WTC11 (cell line): ENCODE measurements at regions of chr5 and their contacts with region 1.

Region 1: GRCh38 chr5:172984243-172984953 is 827 bp downstream of the ATP6V0E1 start:
- DNase-seq: peak; percentile 68
- ATAC-seq: peak; percentile 73
- H3K4me3 Mint-ChIP-seq: peak overlapping the region; percentile 98
- H3K27ac Mint-ChIP-seq: peak overlapping the region; percentile 97
- H3K4me1 Mint-ChIP-seq: peaks cover 9% of the 10 kb centered on the region
- H3K27me3 Mint-ChIP-seq: peaks cover 3% of the 10 kb centered on the region; the same call in 1 of the 2 replicates
- CTCF ChIP-seq: no peak

Region 2: GRCh38 chr5:172707285-172708182 is 276.9 kb before region 1 on chr5:
- CTCF ChIA-PET with region 1: interaction called, 17 read pairs
- POLR2A ChIA-PET with region 1: no interaction called
- DNase-seq: peak; percentile 61
- ATAC-seq: peak; percentile 88
- H3K4me3 Mint-ChIP-seq: peak overlapping the region; percentile 18; the same call in 1 of the 2 replicates
- H3K27ac Mint-ChIP-seq: no peak overlapping the region
- H3K4me1 Mint-ChIP-seq: peaks cover 13% of the 10 kb centered on the region
- H3K27me3 Mint-ChIP-seq: peaks cover 36% of the 10 kb centered on the region
- CTCF ChIP-seq: no peak

Region 3: GRCh38 chr5:172902497-172903200 is 81.7 kb before region 1 on chr5:
- CTCF ChIA-PET with region 1: no interaction called
- POLR2A ChIA-PET with region 1: no interaction called
- DNase-seq: peak; percentile 64
- ATAC-seq: peak; percentile 60
- H3K4me3 Mint-ChIP-seq: no peak overlapping the region
- H3K27ac Mint-ChIP-seq: no peak overlapping the region; the same call in 1 of the 2 replicates
- H3K4me1 Mint-ChIP-seq: peaks cover 18% of the 10 kb centered on the region
- H3K27me3 Mint-ChIP-seq: no peaks in the 10 kb centered on the region
- CTCF ChIP-seq: no peak

Region 4: GRCh38 chr5:172944741-172945140 is 39.7 kb before region 1 on chr5:
- CTCF ChIA-PET with region 1: no interaction called
- POLR2A ChIA-PET with region 1: no interaction called
- DNase-seq: no peak
- ATAC-seq: no peak
- H3K4me3 Mint-ChIP-seq: no peak overlapping the region
- H3K27ac Mint-ChIP-seq: no peak overlapping the region
- H3K4me1 Mint-ChIP-seq: peaks cover 15% of the 10 kb centered on the region
- H3K27me3 Mint-ChIP-seq: no peaks in the 10 kb centered on the region
- CTCF ChIP-seq: no peak

Region 5: DNA sequence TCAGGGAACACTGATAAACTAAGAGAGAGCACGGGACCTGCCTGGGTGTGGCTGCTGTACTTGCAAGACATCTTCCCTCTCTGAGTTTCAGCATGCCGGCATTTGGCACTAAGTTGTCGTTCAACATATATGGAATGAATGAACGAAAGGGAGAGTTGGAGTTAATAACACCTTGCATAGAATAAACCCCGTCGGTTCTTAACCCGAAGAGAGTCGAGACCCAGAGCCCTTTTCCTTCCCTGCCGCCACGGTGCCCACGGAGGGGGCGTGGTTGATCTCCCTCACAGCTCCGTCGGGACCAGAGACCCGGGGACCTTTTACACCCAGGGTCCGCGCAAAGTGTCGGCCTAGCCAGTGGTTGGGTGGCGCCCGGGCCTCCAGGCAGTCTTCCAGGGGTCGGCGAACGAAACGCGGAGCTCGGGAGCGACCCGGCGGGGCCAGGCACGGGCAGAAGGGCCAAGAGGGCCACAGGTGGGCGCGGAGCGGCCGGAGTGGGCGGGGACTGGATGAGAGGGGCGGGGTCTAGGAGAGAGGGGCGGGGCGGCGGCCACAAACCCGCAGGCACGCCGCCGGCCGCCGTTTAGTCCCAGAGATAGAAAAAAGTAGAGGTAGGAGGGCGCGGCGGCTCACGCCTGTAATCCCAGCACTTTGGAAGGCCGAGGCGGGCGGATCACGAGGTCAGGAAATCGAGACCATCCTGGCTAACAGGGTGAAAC is 25.9 kb before region 1 on chr5:
- CTCF ChIA-PET with region 1: interaction called, 19 read pairs
- POLR2A ChIA-PET with region 1: interaction called, 7 read pairs
- DNase-seq: peak; percentile 63
- ATAC-seq: peak; percentile 83
- H3K4me3 Mint-ChIP-seq: peak overlapping the region; percentile 89
- H3K27ac Mint-ChIP-seq: no peak overlapping the region
- H3K4me1 Mint-ChIP-seq: peaks cover 9% of the 10 kb centered on the region
- H3K27me3 Mint-ChIP-seq: peaks cover 42% of the 10 kb centered on the region
- CTCF ChIP-seq: no peak

Region 6: GRCh38 chr5:172994405-172994804 is 10.0 kb after region 1 on chr5:
- CTCF ChIA-PET with region 1: no interaction called
- POLR2A ChIA-PET with region 1: no interaction called
- DNase-seq: no peak
- ATAC-seq: no peak
- H3K4me3 Mint-ChIP-seq: no peak overlapping the region
- H3K27ac Mint-ChIP-seq: no peak overlapping the region
- H3K4me1 Mint-ChIP-seq: no peaks in the 10 kb centered on the region
- H3K27me3 Mint-ChIP-seq: no peaks in the 10 kb centered on the region
- CTCF ChIP-seq: no peak

Region 7: GRCh38 chr5:173057062-173057924 is 72.9 kb after region 1 on chr5:
- CTCF ChIA-PET with region 1: interaction called, 28 read pairs
- POLR2A ChIA-PET with region 1: interaction called, 14 read pairs
- DNase-seq: peak; percentile 100
- ATAC-seq: peak; percentile 91
- H3K4me3 Mint-ChIP-seq: peak overlapping the region; percentile 93
- H3K27ac Mint-ChIP-seq: peak overlapping the region; percentile 98
- H3K4me1 Mint-ChIP-seq: peaks cover 14% of the 10 kb centered on the region
- H3K27me3 Mint-ChIP-seq: no peaks in the 10 kb centered on the region
- CTCF ChIP-seq: no peak

Region 8: DNA sequence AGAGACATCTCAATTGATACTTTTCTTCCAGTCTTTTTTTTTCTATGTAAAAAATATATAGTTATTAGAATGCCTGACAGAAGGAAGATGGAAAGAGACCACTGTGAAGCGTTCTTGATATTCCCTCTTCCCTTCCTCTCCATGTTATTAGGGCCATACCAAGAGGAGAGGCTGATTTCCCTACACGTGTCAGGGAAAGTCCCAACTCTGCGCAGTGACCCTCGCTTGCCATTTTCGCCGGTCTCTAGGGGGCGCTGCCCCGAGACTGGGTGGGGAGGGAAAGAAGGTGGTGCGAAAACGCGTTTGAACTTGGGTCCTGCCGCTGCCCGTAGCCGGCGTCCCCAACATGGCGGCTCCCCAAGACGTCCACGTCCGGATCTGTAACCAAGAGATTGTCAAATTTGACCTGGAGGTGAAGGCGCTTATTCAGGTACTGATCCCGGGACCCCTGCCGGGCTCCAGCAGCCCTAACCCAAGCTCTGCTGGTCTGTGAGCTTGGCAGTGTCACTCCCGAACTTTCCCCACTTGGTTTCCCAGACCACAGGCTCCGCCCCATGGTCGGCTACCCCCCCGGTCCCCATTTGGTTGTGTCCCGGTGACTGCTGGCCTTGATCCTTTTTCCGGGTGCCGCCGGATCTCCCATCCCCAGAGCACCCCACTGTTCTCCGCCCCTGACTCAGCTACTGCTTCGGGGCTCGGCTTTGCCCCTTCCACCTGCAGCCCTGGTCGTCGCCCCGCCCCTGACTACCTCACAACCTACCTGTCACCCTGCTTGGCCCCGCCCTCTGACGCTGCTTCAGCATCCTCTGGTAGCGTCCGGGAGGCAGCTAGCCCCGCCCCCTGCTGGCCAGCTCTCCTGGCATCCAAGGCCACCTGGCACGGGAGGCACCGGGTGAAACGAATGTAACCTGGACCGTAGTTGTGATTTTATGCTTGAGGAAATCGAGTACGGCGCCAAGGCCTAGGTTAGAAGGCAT is 160.1 kb after region 1 on chr5 and contains the start of gene BNIP1:
- CTCF ChIA-PET with region 1: interaction called, 14 read pairs
- POLR2A ChIA-PET with region 1: interaction called, 3 read pairs
- DNase-seq: peak; percentile 99
- ATAC-seq: peak; percentile 96
- H3K4me3 Mint-ChIP-seq: peak within 1 kb of the TSS; percentile 97
- H3K27ac Mint-ChIP-seq: peak within 1 kb of the TSS; percentile 97
- H3K4me1 Mint-ChIP-seq: peaks cover 14% of the 10 kb centered on the region
- H3K27me3 Mint-ChIP-seq: no peaks in the 10 kb centered on the region; the same call in 1 of the 2 replicates
- CTCF ChIP-seq: peak; percentile 83
- total RNA-seq, gene BNIP1: 11.3 to 15.4 TPM (median 12.4 TPM) in 3 replicates

Region 9: DNA sequence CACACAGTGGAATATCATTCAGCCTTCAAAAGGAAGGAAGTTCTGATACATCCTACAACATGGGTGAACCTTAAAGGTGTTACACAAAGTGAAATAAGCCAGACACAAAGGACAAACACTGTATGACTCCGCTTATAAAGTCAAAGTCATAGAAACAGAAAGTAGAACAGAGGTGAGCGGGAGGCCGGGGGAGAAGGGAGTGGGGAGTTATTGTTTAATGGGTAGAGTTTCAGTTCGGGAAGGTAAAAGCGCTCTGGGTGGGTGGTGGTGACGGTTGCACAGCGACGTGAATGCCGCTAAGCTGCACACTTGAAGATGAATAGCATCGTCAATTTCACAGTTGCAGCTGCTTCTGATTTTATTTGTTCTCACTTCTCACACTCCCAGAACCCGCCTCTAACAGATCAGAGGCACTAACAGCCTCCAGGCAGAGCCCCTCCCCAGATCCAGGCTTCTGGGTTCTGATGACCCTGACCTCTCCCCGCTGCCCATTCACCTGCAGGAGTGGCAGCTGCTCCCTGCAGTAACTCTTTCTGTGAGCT is 194.0 kb after region 1 on chr5:
- CTCF ChIA-PET with region 1: no interaction called
- POLR2A ChIA-PET with region 1: interaction called, 10 read pairs
- DNase-seq: no peak
- ATAC-seq: no peak
- H3K4me3 Mint-ChIP-seq: no peak overlapping the region
- H3K27ac Mint-ChIP-seq: no peak overlapping the region
- H3K4me1 Mint-ChIP-seq: peaks cover 8% of the 10 kb centered on the region
- H3K27me3 Mint-ChIP-seq: peaks cover 10% of the 10 kb centered on the region; the same call in 1 of the 2 replicates
- CTCF ChIP-seq: no peak

Region 10: GRCh38 chr5:173283318-173284288 is 299.2 kb after region 1 on chr5:
- CTCF ChIA-PET with region 1: interaction called, 14 read pairs
- POLR2A ChIA-PET with region 1: no interaction called
- DNase-seq: peak; percentile 87
- ATAC-seq: peak; percentile 88
- H3K4me3 Mint-ChIP-seq: peak overlapping the region; percentile 23; the same call in 1 of the 2 replicates
- H3K27ac Mint-ChIP-seq: no peak overlapping the region
- H3K4me1 Mint-ChIP-seq: peaks cover 10% of the 10 kb centered on the region
- H3K27me3 Mint-ChIP-seq: peaks cover 61% of the 10 kb centered on the region
- CTCF ChIP-seq: peak; percentile 58